ENCODE measurements at regions of chr4 and their contacts with region 1.

Region 1: GRCh38 chr4:75499900-75500299 is 14.3 kb downstream of the RCHY1 start:
- DNase-seq: no peak
- H3K4me3 ChIP-seq: no peak overlapping the region
- H3K27ac ChIP-seq: no peak overlapping the region
- H3K4me1 ChIP-seq: peaks cover 0 to 7% (median 0%) of the 10 kb centered on the region in 4 donors
- H3K27me3 ChIP-seq: no peaks in the 10 kb centered on the region
- CTCF ChIP-seq: no peak

Region 2: DNA sequence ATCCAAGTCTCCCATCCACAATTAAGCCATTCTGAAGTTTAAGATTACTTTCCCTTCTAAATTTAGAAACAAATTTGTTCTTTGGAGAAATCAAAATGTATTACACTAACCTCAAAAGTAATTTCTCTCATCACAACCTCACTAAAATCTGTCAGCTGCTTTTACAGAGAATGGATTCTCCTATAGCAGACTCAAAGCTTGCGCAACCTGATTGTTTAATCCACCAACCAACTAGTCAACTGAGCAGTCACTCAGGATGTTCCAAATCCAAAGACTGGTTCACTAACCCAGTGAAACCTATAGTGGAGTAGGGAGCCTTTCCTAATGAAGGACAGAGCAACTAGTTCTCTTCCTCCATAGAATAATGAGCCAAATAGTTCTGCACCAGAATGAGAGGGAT is 30.0 kb before region 1 on chr4:
- intact Hi-C with region 1: no loop called
- DNase-seq: no peak
- H3K4me3 ChIP-seq: no peak overlapping the region
- H3K27ac ChIP-seq: no peak overlapping the region
- H3K4me1 ChIP-seq: no peaks in the 10 kb centered on the region
- H3K27me3 ChIP-seq: no peaks in the 10 kb centered on the region
- CTCF ChIP-seq: no peak

Region 3: GRCh38 chr4:76611164-76611911 is 1111.4 kb after region 1 on chr4:
- intact Hi-C with region 1: loop called (anchors 5 kb)
- DNase-seq: peak in 1 of 2 donors; percentile 77
- H3K4me3 ChIP-seq: peak overlapping the region; percentile 24 to 37
- H3K27ac ChIP-seq: peak overlapping the region; percentile 81 to 84
- H3K4me1 ChIP-seq: peaks cover 0 to 100% (median 64%) of the 10 kb centered on the region in 4 donors
- H3K27me3 ChIP-seq: no peaks in the 10 kb centered on the region
- CTCF ChIP-seq: no peak